GM13977 (cell line): ENCODE measurements at regions of chr15 and their contacts with region 1.

Region 1: GRCh38 chr15:35444557-35445204 is 101.3 kb downstream of the DPH6 start:
- DNase-seq: peak; percentile 45
- CTCF ChIP-seq: peak; percentile 83

Region 2: DNA sequence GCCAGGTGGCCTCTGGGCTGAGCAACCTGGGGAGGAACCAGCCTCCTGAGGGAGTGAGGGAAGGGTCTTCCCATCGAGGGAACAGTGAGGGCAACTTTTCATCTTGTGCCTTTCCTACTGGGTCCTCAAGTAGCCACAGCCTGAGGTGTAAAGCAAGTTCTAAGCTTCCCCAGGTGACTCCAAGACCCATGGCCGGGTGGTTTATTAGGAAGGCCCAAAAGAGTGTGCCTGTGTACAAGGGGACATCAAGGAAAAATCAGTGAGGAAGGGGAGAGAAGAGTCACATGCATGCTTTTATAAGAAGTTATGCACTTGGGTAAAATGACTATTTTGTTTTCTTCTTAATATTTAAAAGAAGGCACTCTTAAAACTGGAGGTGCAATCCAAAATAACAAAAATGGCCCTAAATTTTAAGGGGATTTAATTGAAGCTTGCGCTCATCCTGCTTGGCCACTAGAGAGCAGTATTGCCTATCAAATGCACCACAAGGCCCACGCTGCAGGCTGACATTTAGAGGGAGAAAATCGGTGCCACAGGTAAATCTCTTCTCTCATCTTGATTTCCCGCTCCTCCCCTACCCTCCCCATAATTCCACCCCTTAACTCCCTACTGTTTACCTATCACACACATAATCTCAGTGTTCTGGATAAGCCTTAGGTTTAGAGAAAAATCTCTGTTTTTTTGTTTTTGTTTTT is 366.3 kb before region 1 on chr15:
- in situ Hi-C with region 1: loop called (anchors 25 kb)
- DNase-seq: peak; percentile 81
- CTCF ChIP-seq: peak; percentile 90

Region 3: GRCh38 chr15:35289024-35289617 is 155.6 kb before region 1 on chr15:
- in situ Hi-C with region 1: loop called (anchors 10 kb)
- DNase-seq: no peak
- CTCF ChIP-seq: peak; percentile 73